Panc1 (cell line): ENCODE measurements at regions of chr18 and their contacts with region 1.

Region 1: DNA sequence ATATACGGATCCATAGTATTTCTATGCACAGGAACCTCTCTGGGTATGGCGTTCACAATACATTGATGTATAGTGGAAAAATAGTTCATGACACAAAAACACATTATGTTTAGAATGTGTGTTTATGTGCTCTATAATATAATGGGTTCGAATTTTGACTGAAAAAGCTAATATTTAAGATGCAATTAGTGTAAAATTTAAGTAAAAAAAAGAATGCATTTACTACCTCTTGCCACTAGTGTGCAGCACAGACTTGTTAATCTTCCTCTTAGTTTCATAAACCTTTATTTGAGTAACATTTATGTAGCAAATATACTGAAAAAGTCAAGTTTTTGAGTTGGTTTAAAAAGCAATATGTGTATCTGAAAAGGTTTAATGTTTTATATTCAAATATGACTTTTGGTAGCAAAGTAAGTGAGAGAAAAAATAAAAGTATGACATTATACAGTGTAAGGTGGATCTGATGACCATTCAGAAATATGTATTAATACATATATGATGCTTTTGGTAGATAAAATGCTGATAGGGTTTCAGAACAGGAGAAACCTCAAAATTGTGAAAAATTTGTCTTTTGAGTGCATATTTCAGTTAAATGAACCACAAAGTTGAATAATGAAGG is 49.4 kb downstream of the CCDC102B start:
- DNase-seq: no peak
- ATAC-seq: no peak
- H3K4me3 ChIP-seq: no peak overlapping the region
- H3K27ac ChIP-seq: no peak overlapping the region
- H3K4me1 ChIP-seq: no peaks in the 10 kb centered on the region
- H3K27me3 ChIP-seq: no peaks in the 10 kb centered on the region
- CTCF ChIP-seq: peak; percentile 38; the same call in 1 of the 2 replicates

Region 2: GRCh38 chr18:70085641-70086040 is 1238.3 kb after region 1 on chr18:
- CTCF ChIA-PET with region 1: interaction called, 3 read pairs
- POLR2A ChIA-PET with region 1: no interaction called
- in situ Hi-C with region 1: no loop called
- intact Hi-C with region 1: loop called (anchors 5 kb)
- DNase-seq: no peak
- ATAC-seq: no peak
- H3K4me3 ChIP-seq: no peak overlapping the region
- H3K27ac ChIP-seq: no peak overlapping the region
- H3K4me1 ChIP-seq: no peaks in the 10 kb centered on the region; the same call in 1 of the 2 replicates
- H3K27me3 ChIP-seq: no peaks in the 10 kb centered on the region
- CTCF ChIP-seq: no peak